ENCODE measurements at regions of chr12 and their contacts with region 1.

Region 1: DNA sequence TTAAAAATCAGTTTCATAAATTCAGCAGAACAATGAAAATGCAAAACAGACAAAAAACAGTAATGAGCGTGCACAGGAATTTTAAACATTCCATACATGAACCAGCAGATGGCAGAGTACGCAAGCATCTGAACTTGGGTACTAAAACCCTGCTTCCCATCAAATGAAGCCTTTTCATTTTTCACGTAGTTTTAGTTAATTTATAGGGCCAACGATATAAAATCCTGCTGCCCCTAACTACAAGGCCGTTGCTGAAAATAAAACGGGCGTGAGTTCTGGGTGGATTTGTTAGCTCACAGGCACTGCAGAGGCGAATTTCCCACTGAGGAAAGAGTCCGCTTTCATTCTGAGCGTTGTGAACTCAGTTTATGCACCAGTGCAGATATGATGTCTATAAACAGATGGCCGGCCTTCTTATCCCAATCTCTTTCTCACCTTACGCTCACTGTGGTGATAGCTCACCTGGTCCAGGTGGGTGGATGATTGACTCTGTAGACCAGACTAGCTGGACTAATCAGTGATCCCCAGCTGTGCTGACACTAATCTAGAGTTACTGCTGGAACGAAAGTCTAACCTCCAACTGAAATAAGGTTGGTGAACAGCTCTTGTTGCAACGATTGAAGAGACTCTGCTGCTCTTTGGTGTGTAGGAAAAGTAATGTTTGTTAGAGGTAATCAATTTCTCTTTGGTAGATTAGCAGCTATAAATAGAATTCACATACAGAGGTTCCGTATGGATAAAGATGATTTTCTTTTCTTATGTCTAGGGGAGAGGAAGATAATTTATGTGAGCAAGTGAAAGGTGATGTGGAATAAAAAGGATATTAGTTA is 89.2 kb downstream of the PDZRN4 start:
- DNase-seq: peak; percentile 71
- H3K4me3 ChIP-seq: no peak overlapping the region
- H3K27ac ChIP-seq: no peak overlapping the region
- H3K4me1 ChIP-seq: peaks cover 14% of the 10 kb centered on the region
- H3K27me3 ChIP-seq: no peaks in the 10 kb centered on the region
- CTCF ChIP-seq: peak; percentile 72

Region 2: DNA sequence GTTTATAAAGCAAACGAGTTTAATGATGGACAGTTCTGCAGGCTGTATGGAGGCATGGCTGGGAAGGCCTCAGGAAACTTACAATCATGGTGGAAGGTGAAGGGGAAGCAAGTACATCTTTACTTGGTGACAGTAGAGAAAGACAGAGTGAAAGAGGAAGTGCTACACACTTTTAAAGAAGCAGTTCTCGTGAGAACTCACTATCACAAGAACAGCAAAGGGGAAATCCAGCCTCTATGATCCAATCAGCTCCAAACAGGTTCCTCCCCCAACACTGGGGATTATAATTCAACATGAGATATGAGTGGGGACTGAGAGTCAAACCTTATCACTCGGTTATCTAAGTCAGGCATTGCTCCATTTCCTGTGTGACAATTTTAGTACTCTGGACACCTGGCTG is 775.0 kb before region 1 on chr12:
- CTCF ChIA-PET with region 1: no interaction called
- POLR2A ChIA-PET with region 1: no interaction called
- intact Hi-C with region 1: no loop called
- DNase-seq: no peak
- H3K4me3 ChIP-seq: no peak overlapping the region
- H3K27ac ChIP-seq: no peak overlapping the region
- H3K4me1 ChIP-seq: no peaks in the 10 kb centered on the region
- H3K27me3 ChIP-seq: no peaks in the 10 kb centered on the region
- CTCF ChIP-seq: no peak

Region 3: DNA sequence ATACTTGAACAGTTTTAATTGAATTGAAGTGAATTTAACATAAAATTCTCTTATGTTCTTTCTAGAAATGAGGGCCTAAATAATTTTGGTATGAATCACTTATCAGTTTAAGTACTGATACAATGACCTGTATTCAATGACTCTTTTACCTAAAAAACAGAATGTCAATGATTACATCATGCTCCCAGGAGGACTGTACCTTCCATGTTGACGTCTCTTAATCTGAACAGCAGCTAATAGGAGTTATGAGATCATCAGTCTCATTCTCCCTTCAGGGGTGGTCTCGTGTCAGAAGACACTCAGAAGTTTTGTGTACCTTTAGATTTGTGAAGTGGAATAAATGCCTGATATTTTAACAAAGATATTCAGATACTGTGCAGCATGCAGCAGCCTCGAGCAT is 378.8 kb before region 1 on chr12:
- CTCF ChIA-PET with region 1: no interaction called
- POLR2A ChIA-PET with region 1: no interaction called
- intact Hi-C with region 1: no loop called
- DNase-seq: no peak
- H3K4me3 ChIP-seq: no peak overlapping the region
- H3K27ac ChIP-seq: no peak overlapping the region
- H3K4me1 ChIP-seq: no peaks in the 10 kb centered on the region
- H3K27me3 ChIP-seq: no peaks in the 10 kb centered on the region
- CTCF ChIP-seq: no peak

Region 4: DNA sequence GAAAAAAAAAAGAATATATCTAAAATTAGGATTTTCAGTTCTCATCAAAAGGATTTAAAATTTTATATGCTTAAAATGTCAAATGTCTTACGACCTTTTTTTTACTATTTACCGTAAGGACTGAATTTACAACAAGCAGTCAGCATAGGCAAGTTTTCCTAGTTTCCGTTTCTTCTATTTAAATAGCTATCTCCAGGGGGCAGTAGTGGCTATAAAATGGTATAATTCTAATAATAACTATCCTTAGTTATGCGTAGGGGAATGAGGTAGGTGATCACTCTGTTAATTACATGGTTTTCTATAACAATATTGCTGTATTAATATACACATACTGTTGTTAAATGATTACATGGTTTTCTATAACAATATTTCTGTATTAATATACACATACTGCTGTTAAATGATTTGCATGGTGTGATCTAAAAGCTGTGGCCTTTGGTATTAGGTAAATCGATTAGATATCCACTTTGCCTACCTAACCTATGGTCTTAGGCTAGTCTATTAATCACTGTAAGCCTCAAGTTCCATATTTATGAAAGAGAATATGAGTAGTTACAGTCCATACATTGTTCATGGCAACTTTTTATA is 306.9 kb before region 1 on chr12:
- CTCF ChIA-PET with region 1: no interaction called
- POLR2A ChIA-PET with region 1: no interaction called
- intact Hi-C with region 1: loop called (anchors 10 kb)
- DNase-seq: peak; percentile 70
- H3K4me3 ChIP-seq: no peak overlapping the region
- H3K27ac ChIP-seq: no peak overlapping the region
- H3K4me1 ChIP-seq: peaks cover 17% of the 10 kb centered on the region
- H3K27me3 ChIP-seq: no peaks in the 10 kb centered on the region
- CTCF ChIP-seq: peak; percentile 68

Region 5: DNA sequence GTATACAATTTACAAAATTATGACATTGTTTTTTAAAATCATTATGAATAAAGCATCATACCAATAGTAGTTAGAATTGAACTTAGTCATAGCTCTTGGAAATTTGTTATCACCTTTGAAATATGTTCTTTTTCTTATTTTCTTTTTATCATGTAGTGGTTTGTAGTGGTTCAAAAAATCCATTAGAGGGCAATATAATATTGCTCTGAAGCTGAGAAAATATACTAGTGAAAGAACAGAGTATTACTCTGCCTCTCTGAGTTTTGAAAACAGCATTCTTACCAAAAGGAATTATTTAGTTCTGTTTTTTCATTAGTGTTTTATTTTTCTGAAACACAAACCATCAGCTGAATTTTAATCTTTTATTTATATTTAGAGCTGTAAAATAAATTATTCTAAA is 13.1 kb before region 1 on chr12:
- CTCF ChIA-PET with region 1: no interaction called
- POLR2A ChIA-PET with region 1: no interaction called
- intact Hi-C with region 1: no loop called
- DNase-seq: no peak
- H3K4me3 ChIP-seq: no peak overlapping the region
- H3K27ac ChIP-seq: no peak overlapping the region
- H3K4me1 ChIP-seq: no peaks in the 10 kb centered on the region
- H3K27me3 ChIP-seq: no peaks in the 10 kb centered on the region
- CTCF ChIP-seq: peak; percentile 57

Region 6: GRCh38 chr12:41302979-41303403 is 25.7 kb after region 1 on chr12:
- CTCF ChIA-PET with region 1: no interaction called
- POLR2A ChIA-PET with region 1: no interaction called
- intact Hi-C with region 1: no loop called
- DNase-seq: no peak
- H3K4me3 ChIP-seq: no peak overlapping the region
- H3K27ac ChIP-seq: no peak overlapping the region
- H3K4me1 ChIP-seq: peaks cover 12% of the 10 kb centered on the region
- H3K27me3 ChIP-seq: no peaks in the 10 kb centered on the region
- CTCF ChIP-seq: no peak

Region 7: GRCh38 chr12:41663598-41664258 is 386.4 kb after region 1 on chr12:
- CTCF ChIA-PET with region 1: no interaction called
- POLR2A ChIA-PET with region 1: interaction called, 5 read pairs
- intact Hi-C with region 1: loop called (anchors 1 kb)
- DNase-seq: peak; percentile 73
- H3K4me3 ChIP-seq: no peak overlapping the region
- H3K27ac ChIP-seq: no peak overlapping the region
- H3K4me1 ChIP-seq: peaks cover 11% of the 10 kb centered on the region
- H3K27me3 ChIP-seq: no peaks in the 10 kb centered on the region
- CTCF ChIP-seq: peak; percentile 77

Region 8: DNA sequence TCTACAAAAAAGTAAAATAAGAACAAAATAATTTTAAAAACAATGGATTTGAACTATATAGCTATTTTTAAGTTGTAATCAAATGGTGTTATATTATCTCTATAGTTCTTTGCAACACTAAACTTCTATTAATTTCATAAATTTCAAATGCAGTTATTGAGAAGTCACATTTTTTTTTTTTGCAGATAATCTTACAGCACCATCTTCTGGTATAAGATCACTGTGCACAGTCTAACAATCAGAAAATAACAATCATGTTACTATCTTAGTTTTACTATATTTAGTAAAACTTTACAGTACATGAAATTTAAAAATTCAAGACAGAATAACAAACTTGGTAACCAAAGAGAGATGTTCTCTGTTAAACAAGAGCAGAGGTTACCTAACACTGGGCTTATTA is 826.8 kb after region 1 on chr12:
- CTCF ChIA-PET with region 1: no interaction called
- POLR2A ChIA-PET with region 1: no interaction called
- intact Hi-C with region 1: loop called (anchors 2 kb)
- DNase-seq: peak; percentile 8
- H3K4me3 ChIP-seq: no peak overlapping the region
- H3K27ac ChIP-seq: no peak overlapping the region
- H3K4me1 ChIP-seq: peaks cover 19% of the 10 kb centered on the region
- H3K27me3 ChIP-seq: no peaks in the 10 kb centered on the region
- CTCF ChIP-seq: peak; percentile 65

Region 9: GRCh38 chr12:42372154-42372791 is 1094.9 kb after region 1 on chr12:
- CTCF ChIA-PET with region 1: no interaction called
- POLR2A ChIA-PET with region 1: no interaction called
- intact Hi-C with region 1: loop called (anchors 5 kb)
- DNase-seq: peak; percentile 70
- H3K4me3 ChIP-seq: no peak overlapping the region
- H3K27ac ChIP-seq: no peak overlapping the region
- H3K4me1 ChIP-seq: no peaks in the 10 kb centered on the region
- H3K27me3 ChIP-seq: no peaks in the 10 kb centered on the region
- CTCF ChIP-seq: peak; percentile 82

Measured in A673 (cell line).